ENCODE measurements at regions of chr1 and their contacts with region 1.

Region 1: DNA sequence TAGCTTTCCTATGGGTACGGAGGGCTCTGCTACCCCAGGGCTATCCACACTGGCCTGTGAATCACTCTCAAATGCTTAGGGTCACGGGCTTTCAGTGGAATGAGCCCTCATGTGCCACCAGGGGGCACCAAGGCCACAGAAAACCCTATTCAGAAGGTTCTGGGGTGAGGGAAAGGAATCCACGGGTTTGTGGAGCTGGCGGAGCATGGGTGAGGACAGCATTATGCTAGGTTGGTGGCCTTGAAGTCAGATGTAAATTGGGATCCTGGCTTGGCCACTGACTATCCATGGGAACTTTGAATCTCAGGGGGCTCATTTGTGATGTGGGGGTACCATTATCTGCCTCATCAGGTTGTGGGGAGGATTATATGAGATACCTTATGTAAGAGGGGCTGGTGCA is 5.1 kb upstream of the LAMTOR5 start:
- DNase-seq: peak; percentile 74
- ATAC-seq: peak; percentile 62

Region 2: GRCh38 chr1:109327285-109327684 is 1085.3 kb before region 1 on chr1:
- intact Hi-C with region 1: no loop called
- DNase-seq: no peak
- ATAC-seq: no peak

Region 3: GRCh38 chr1:110087812-110088738 is 324.5 kb before region 1 on chr1:
- intact Hi-C with region 1: no loop called
- DNase-seq: peak; percentile 37
- ATAC-seq: peak; percentile 67

Region 4: DNA sequence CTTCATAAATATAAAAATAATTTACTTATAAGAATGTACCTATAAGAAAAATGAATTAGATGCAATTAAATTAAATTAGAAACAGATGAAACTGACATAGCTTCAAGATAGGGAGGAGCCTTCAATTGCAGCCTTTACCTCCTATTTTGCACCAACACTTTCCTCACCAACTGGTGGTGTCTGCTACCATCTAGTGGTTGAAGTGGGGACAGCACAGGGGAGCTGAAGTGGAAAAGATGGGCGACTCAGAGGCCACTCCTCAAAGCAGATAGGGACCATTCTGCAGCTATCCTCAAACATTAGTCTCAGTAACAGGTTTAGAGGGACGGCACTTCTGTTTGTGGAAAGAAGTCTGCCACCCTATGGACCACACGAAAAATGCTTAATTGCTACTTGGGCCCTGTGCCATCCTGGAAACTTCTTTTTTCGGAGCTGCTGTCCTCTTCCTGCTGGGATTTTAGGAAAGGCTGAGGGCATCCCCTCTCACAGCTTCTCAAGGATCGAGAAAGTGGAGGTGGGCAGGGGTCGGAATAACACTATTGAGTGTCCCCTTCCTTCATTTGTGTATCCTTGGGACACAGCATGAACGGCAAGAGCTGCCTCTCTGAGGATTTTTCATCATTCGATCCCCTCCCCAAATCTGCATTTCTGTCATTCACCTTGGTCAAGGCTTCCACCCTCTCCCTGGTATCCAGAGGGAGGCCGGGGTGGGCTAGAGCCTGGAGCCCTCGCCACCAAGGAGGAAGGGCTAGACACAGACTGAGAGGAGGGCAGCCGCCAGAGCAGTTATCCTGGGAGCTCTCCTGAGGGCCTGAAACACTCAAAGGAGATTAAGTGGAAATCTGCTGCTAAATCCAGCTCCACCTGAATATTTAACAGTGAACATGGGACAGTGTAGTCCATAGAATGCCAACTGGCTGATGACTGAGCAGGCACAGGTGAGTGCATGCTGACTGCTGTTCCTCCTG is 48.0 kb after region 1 on chr1:
- intact Hi-C with region 1: loop called (anchors 5 kb)
- DNase-seq: peak; percentile 53
- ATAC-seq: peak; percentile 87

Region 5: DNA sequence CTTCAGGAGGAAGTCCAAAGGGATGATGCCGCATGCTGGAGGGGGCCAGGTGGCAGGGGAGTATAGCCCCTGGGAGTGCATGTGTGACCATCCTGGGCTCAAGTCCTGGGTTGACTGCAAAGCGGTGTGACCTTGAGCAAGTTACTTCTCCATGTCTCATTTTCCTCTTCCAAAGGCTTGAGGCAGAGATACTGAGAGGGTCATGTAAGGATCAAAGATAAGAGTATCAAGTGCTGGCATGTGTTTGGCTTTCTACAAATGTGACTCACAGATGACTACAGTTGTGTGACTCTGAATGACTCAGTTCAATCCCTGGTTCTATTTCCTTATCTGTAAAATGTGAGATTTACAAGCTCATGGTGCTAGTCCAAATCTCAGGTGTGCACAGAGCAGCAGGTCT is 64.5 kb after region 1 on chr1:
- intact Hi-C with region 1: no loop called
- DNase-seq: no peak
- ATAC-seq: peak; percentile 74

Region 6: DNA sequence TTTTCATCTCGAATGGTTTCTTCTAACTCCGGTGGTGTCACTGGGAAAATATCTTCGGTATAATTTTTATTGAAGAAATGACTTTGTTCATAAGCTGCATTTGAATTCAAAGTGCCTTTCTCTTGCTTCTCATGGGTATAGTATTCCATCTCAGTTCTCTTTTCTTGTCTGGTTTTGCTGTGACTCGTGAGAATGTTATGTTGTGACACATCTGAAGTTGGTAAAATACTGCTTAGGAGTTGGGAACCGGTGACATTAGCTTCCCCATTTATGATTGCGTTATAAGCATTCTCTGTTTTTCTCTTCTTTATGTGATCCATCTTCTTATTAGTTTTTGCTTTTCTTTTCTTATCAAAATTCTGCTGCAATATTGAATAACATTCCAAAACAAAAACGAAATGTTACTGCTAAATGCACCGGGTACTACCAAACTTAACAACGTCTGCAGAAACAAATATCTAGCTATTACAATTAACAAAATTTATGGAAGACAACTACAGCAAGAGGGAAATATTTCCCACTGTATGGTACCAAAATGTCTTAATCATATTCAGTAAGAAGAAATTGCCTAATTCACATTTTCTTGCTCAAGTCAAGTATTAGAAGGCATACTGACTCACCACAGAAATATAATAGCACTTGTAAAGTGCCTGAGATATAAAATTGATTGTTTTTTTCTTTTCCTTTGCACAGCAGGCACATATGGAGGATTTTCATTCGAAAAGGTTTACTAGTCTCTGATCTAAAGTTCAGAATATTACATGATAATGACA is 535.6 kb after region 1 on chr1:
- intact Hi-C with region 1: no loop called
- DNase-seq: no peak
- ATAC-seq: no peak

Measured in left ventricle myocardium superior (tissue), 1 donor.